AG04450 (cell line): ENCODE measurements at regions of chr10 and their contacts with region 1.

Region 1: DNA sequence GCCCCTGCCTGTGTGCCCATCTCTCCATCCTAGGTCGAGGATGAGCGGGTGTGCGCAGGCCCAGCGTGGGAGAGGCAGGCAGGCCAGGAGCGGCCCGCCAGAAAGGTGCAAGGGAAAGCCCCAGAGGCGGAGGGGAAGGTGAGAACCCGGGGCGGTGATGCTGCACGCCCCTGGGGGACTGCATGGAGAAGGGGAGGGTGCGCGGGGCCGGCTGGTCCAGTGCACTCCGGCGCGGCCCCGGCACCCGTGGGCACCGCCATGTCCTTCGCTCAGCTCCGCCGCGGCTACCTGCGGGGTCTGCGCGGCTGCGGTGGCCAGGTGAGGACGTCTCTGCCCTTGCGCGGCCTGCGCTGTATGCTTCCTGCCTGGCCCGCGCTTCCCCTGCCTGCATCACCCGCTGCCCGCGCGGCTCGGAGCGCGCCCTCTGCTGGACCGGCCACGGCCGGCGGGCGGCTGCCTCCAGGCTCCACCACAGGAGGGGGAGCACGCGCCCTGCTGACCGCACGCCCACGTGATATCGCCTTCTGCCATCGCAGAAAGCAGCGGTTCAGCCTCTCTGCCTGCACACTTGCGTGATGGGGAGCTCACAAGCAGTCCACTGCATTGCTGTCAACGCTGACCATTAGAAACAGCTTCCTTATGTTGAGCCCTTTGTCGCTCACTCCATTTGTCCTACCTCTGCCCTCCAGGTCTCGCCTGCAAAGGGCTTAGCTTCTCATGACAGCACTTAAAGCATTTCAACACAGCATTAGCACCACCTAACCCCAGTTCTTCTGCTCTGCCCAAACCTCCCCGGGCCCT is 73.9 kb downstream of the CXCL12 start:
- DNase-seq: peak; percentile 45
- H3K4me3 ChIP-seq: peak overlapping the region; percentile 32; the same call in 1 of the 2 replicates
- H3K27ac ChIP-seq: no peak overlapping the region
- H3K27me3 ChIP-seq: no peaks in the 10 kb centered on the region
- CTCF ChIP-seq: peak; percentile 83

Region 2: GRCh38 chr10:43689955-43690771 is 620.8 kb before region 1 on chr10:
- CTCF ChIA-PET with region 1: interaction called, 17 read pairs
- POLR2A ChIA-PET with region 1: no interaction called
- DNase-seq: peak; percentile 26
- H3K4me3 ChIP-seq: peak overlapping the region; percentile 73
- H3K27ac ChIP-seq: no peak overlapping the region
- H3K27me3 ChIP-seq: no peaks in the 10 kb centered on the region
- CTCF ChIP-seq: peak; percentile 75

Region 3: GRCh38 chr10:44300666-44301649 is 10.0 kb before region 1 on chr10:
- CTCF ChIA-PET with region 1: interaction called, 12 read pairs
- POLR2A ChIA-PET with region 1: no interaction called
- DNase-seq: peak; percentile 94
- H3K4me3 ChIP-seq: no peak overlapping the region
- H3K27ac ChIP-seq: peak overlapping the region; percentile 74
- H3K27me3 ChIP-seq: no peaks in the 10 kb centered on the region
- CTCF ChIP-seq: no peak

Region 4: DNA sequence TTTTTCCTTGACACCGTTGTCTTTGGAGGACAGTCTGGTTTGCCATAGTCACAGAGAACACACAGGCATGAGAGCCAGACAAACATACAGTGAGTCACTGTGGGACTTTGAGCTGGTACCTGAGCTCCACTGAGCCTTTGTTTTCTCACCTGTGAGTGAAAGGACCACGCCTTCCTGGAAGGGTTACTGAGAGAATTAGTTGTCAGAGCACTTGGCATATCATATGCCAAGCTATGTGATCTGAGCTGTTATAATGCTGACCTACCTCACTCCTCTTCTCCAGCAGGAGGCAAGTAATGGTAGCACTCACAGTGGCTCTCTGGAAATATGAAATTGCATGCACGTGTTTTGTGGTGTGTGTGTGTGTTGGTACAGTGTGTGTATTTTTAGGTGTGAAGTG is 14.2 kb after region 1 on chr10:
- CTCF ChIA-PET with region 1: interaction called, 18 read pairs
- POLR2A ChIA-PET with region 1: no interaction called
- DNase-seq: no peak
- H3K4me3 ChIP-seq: no peak overlapping the region
- H3K27ac ChIP-seq: no peak overlapping the region
- H3K27me3 ChIP-seq: peaks cover 7% of the 10 kb centered on the region
- CTCF ChIP-seq: no peak

Region 5: GRCh38 chr10:44334621-44335184 is 23.7 kb after region 1 on chr10:
- CTCF ChIA-PET with region 1: interaction called, 12 read pairs
- POLR2A ChIA-PET with region 1: interaction called, 3 read pairs
- DNase-seq: peak; percentile 67
- H3K4me3 ChIP-seq: no peak overlapping the region
- H3K27ac ChIP-seq: peak overlapping the region; percentile 66
- H3K27me3 ChIP-seq: no peaks in the 10 kb centered on the region
- CTCF ChIP-seq: no peak

Region 6: DNA sequence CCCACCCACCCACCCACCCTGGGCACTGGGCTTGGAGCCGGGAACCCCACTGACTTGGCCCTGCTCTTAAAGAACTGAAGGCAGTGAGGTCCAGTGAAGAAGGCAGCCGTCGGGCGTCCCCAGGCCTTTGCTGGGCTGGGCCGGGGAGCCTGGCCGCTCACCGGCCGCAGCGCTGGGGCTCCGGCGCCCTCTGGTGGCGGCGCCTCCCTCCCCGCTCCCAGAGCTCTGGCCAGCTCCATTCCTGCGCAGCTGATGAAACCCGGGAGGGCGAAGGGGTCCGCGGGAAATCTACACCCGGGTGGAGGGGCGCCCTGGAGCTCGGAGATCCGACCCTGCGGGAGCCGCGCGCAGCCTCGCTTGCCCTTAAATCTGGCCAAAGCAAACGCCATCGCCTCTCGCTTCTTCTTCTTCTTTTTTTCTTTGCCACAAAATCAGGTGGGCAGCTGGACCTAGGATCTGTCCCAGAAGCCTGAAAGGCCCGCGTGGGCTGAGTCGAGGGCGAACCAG is 75.6 kb after region 1 on chr10:
- CTCF ChIA-PET with region 1: interaction called, 12 read pairs
- POLR2A ChIA-PET with region 1: no interaction called
- DNase-seq: no peak
- H3K4me3 ChIP-seq: peak overlapping the region; percentile 41
- H3K27ac ChIP-seq: no peak overlapping the region
- H3K27me3 ChIP-seq: peaks cover 4% of the 10 kb centered on the region
- CTCF ChIP-seq: peak; percentile 88

Region 7: DNA sequence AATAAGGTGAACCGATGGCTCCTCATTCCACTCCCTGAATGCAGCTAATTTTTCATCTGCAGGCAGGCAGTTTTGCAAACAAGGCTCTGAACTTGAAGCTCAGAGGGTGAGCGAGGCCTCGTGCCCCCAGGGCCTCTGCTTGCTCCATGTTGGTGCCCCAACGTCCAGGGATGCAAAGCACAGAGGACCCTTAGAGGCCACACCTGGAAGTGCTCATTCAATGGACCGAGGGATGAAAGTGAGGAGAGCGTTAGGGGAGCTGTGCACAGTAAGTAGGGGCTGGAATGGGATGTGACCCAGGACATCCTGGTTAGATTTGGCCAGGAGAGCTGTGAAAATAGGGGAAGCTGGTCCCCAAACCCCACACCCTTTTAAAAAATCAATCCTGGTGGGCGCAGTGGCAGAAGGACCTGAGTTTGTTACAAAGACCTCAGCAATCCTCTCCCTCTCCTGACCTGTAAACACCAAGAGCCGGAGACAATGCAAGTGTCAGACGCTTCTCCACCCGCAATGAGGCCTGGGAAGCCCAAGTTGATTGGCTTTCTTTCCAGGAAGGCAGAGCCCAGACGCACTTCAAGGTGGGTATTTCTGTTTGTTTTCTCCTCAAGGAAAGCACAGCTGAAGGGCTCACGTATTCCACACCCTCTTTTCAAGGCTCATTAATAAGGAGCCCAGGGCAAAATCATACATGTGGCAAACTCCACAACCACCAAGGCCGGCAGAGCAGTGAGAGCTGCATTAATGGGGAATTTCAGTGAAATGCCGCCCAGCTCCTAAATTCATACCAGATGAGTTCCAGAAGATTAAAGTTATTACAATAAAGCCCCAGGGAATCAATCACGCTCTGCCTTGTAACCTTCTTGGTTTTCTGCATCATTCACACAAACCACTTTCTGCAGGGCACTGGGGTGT is 88.0 kb after region 1 on chr10:
- CTCF ChIA-PET with region 1: no interaction called
- POLR2A ChIA-PET with region 1: no interaction called
- DNase-seq: no peak
- H3K4me3 ChIP-seq: no peak overlapping the region
- H3K27ac ChIP-seq: no peak overlapping the region
- H3K27me3 ChIP-seq: peaks cover 36% of the 10 kb centered on the region
- CTCF ChIP-seq: no peak